Heart left ventricle (tissue), 16 donors: ENCODE measurements at regions of chr19 and their contacts with region 1.

Region 1: GRCh38 chr19:13255041-13255718 is 105.0 kb downstream of the IER2 start:
- DNase-seq: no peak
- ATAC-seq: no peak
- H3K4me3 ChIP-seq: no peak overlapping the region
- H3K27ac ChIP-seq: no peak overlapping the region
- H3K4me1 ChIP-seq: no peaks in the 10 kb centered on the region
- H3K27me3 ChIP-seq: peaks cover 0 to 16% (median 0%) of the 10 kb centered on the region in 9 donors
- CTCF ChIP-seq: no peak
- POLR2A ChIP-seq: no peak

Region 2: DNA sequence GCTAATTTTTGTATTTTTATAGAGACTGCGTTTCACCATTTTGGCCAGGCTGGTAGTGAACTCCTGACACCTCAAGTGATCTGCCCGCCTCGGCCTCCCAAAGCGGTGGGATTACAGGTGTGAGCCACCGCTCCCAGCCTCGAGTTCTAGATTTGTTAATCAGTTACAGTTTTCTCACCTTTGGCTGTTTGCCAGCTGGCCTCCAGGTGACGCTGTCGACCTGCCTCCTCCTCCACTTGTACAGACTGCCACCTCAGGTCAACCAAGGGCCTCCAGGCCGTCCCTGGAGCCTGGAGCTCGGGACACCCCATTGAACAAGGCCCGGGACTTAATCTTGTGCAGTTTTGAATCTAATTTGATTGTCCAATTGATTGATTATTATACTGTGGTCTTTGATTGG is 59.5 kb before region 1 on chr19:
- intact Hi-C with region 1: loop called in 7 of 10 experiments (anchors 5 kb)
- DNase-seq: no peak
- ATAC-seq: no peak
- H3K4me3 ChIP-seq: no peak overlapping the region
- H3K27ac ChIP-seq: no peak overlapping the region
- H3K4me1 ChIP-seq: peaks cover 0 to 18% (median 0%) of the 10 kb centered on the region in 12 donors
- H3K27me3 ChIP-seq: no peaks in the 10 kb centered on the region
- CTCF ChIP-seq: peak in 1 of 12 donors; percentile 25
- POLR2A ChIP-seq: no peak